Left ventricle myocardium inferior (tissue), 1 donor: ENCODE measurements at regions of chr10 and their contacts with region 1.

Region 1: GRCh38 chr10:50624866-50625692 is 1.3 kb upstream of the SGMS1 start:
- DNase-seq: peak; percentile 60
- H3K4me3 ChIP-seq: peak overlapping the region; percentile 84
- H3K27ac ChIP-seq: peak overlapping the region; percentile 99
- H3K4me1 ChIP-seq: peaks cover 52% of the 10 kb centered on the region
- H3K27me3 ChIP-seq: no peaks in the 10 kb centered on the region
- CTCF ChIP-seq: peak; percentile 82

Region 2: GRCh38 chr10:50293513-50294313 is 331.4 kb before region 1 on chr10:
- intact Hi-C with region 1: no loop called
- DNase-seq: no peak
- H3K4me3 ChIP-seq: no peak overlapping the region
- H3K27ac ChIP-seq: no peak overlapping the region
- H3K4me1 ChIP-seq: no peaks in the 10 kb centered on the region
- H3K27me3 ChIP-seq: no peaks in the 10 kb centered on the region
- CTCF ChIP-seq: no peak

Region 3: GRCh38 chr10:50304660-50305059 is 320.4 kb before region 1 on chr10:
- intact Hi-C with region 1: loop called (anchors 10 kb)
- DNase-seq: no peak
- H3K4me3 ChIP-seq: no peak overlapping the region
- H3K27ac ChIP-seq: no peak overlapping the region
- H3K4me1 ChIP-seq: no peaks in the 10 kb centered on the region
- H3K27me3 ChIP-seq: no peaks in the 10 kb centered on the region
- CTCF ChIP-seq: no peak

Region 4: DNA sequence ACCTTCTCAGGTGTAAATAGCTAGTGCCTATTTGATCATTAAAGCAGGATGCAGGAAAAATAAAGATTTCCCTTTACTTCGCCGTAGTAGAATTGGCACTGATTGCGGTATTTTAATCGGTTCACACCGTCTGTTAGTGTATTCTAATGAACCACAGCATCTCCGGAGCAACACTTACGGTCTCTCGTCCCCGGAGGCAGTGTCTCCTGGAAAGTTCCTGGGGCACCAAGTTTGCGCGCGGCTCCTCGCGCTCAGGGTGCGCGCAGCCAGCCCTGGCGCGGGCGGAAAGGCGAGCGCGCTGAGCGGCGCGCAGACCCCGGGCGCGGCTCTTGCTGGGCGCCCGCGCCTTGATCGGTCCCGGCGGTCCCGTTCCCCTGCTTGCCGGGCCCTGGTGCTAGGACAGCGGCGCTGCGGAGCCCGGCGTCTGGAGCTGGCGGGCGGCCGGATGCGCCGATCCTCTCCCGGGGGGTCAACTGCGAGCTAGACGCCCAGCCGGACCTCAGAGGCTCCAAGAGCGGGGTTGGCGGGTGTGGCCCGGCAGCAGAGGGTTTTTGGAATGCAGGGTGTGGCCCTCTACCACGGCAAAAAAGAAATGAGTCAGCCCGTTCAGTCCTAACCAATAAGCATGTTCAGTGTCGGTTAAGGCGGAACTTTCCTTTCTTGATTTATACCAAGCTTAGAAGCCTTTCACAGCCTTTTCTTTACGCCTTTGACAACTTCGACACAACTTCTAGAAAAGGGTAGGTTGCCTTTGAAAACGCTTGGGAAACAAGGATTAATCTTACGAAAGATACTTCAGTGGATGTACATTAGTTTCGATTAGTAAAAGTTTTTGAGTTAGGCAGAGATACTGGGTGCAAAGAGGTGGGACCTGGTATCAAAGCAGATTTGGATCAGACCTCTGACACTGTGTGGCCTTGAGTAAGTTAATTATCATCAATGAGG is 206.9 kb before region 1 on chr10:
- intact Hi-C with region 1: loop called (anchors 10 kb)
- DNase-seq: peak; percentile 79
- H3K4me3 ChIP-seq: peak overlapping the region; percentile 76
- H3K27ac ChIP-seq: peak overlapping the region; percentile 82
- H3K4me1 ChIP-seq: peaks cover 64% of the 10 kb centered on the region
- H3K27me3 ChIP-seq: no peaks in the 10 kb centered on the region
- CTCF ChIP-seq: no peak

Region 5: GRCh38 chr10:51010977-51011376 is 385.9 kb after region 1 on chr10:
- intact Hi-C with region 1: no loop called
- DNase-seq: no peak
- H3K4me3 ChIP-seq: no peak overlapping the region
- H3K27ac ChIP-seq: no peak overlapping the region
- H3K4me1 ChIP-seq: peaks cover 17% of the 10 kb centered on the region
- H3K27me3 ChIP-seq: no peaks in the 10 kb centered on the region
- CTCF ChIP-seq: peak; percentile 77